ENCODE measurements at regions of chr2 and their contacts with region 1.

Region 1: GRCh38 chr2:233061591-233062450 is 1.7 kb downstream of the INPP5D start:
- DNase-seq: peak; percentile 56
- ATAC-seq: peak; percentile 29
- H3K4me3 Mint-ChIP-seq: peak overlapping the region; percentile 98
- H3K27ac Mint-ChIP-seq: peak overlapping the region; percentile 91
- H3K4me1 Mint-ChIP-seq: peaks cover 54% of the 10 kb centered on the region
- H3K27me3 Mint-ChIP-seq: no peaks in the 10 kb centered on the region

Region 2: DNA sequence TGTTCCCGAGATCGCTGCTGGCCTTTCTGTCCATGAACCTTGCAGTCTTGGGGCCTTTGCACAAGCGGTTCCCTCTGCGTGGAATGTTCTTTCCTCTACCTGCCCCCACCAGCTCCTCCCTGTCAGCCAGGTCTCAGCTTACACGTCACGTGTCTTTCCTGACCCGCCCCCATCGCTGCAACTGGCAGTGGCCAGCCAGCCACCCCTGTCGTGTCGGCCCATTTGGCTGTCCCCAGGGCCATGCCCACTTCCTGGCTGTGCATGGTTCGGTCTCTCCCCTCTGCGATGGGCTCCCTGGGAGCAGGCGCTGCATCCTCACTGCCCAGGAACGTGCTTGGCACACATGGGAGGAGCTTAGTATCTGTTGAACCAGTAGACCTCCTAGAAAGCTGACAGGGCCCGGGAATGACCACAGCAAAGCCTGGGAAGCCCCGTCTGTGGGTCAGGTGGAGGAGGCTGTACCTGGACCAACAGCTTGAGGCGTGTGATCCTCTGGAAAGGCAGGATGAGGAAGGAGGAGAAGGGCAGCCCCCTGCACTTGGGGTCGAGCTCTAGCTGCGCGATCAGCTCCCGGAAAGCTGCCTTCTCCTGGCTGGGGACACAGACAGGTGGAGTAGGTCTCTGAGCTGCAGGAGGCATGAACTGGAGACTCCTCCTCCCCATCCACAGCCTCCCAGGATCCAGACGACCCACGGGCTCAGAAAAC is 170.8 kb before region 1 on chr2:
- CTCF ChIA-PET with region 1: no interaction called
- POLR2A ChIA-PET with region 1: no interaction called
- DNase-seq: no peak
- ATAC-seq: peak; percentile 15
- H3K4me3 Mint-ChIP-seq: no peak overlapping the region
- H3K27ac Mint-ChIP-seq: no peak overlapping the region
- H3K4me1 Mint-ChIP-seq: no peaks in the 10 kb centered on the region
- H3K27me3 Mint-ChIP-seq: peaks cover 3% of the 10 kb centered on the region

Region 3: DNA sequence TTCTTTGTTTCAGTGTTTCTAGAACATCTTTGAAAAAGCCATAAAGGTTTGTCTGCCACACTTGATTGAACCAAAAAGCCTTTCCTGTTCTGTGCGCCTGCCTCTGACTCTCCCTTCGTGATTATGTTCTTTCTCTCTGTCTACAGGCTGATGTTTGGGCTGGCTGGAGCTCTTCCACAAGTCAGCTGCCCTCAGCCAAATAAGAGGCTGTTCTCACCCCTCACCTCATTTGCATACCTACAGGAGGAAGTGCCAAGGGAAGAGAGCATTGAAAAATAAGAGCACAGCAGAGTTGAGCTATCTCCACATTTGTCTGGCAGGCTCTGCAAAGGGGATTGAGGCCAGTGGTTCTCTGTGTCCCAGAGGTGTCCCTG is 14.1 kb after region 1 on chr2:
- CTCF ChIA-PET with region 1: interaction called, 18 read pairs
- POLR2A ChIA-PET with region 1: interaction called, 136 read pairs
- DNase-seq: peak; percentile 61
- ATAC-seq: peak; percentile 69
- H3K4me3 Mint-ChIP-seq: no peak overlapping the region
- H3K27ac Mint-ChIP-seq: no peak overlapping the region
- H3K4me1 Mint-ChIP-seq: peaks cover 44% of the 10 kb centered on the region
- H3K27me3 Mint-ChIP-seq: no peaks in the 10 kb centered on the region

Region 4: DNA sequence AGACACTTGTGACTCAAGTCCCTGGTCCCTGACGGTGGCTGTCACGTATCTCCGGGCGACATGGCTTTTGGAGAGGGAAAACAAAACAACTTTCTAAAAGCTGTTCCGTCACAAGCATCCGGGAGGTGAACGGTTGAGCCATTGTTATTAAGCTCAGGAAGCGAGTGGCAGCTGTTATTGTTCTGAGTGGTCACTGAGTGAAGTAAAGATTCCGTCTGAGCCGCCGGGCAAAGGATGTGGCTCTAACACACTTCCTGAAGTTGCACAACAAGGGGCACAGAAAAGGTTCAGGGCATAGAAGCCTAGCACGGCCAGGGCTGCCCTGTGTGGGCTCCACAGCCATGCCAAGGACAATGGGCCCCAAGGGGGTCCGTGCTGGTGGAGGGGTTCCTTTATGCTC is 22.7 kb after region 1 on chr2:
- CTCF ChIA-PET with region 1: interaction called, 24 read pairs
- POLR2A ChIA-PET with region 1: interaction called, 136 read pairs
- DNase-seq: peak; percentile 73
- ATAC-seq: peak; percentile 24
- H3K4me3 Mint-ChIP-seq: peak overlapping the region; percentile 71
- H3K27ac Mint-ChIP-seq: peak overlapping the region; percentile 93
- H3K4me1 Mint-ChIP-seq: peaks cover 84% of the 10 kb centered on the region
- H3K27me3 Mint-ChIP-seq: no peaks in the 10 kb centered on the region

Region 5: GRCh38 chr2:233100192-233100998 is 38.6 kb after region 1 on chr2:
- CTCF ChIA-PET with region 1: interaction called, 22 read pairs
- POLR2A ChIA-PET with region 1: interaction called, 5 read pairs
- DNase-seq: peak; percentile 71
- ATAC-seq: peak; percentile 85
- H3K4me3 Mint-ChIP-seq: peak overlapping the region; percentile 52
- H3K27ac Mint-ChIP-seq: peak overlapping the region; percentile 78
- H3K4me1 Mint-ChIP-seq: peaks cover 70% of the 10 kb centered on the region
- H3K27me3 Mint-ChIP-seq: no peaks in the 10 kb centered on the region

Region 6: GRCh38 chr2:233142355-233142897 is 80.6 kb after region 1 on chr2:
- CTCF ChIA-PET with region 1: interaction called, 5 read pairs
- POLR2A ChIA-PET with region 1: interaction called, 19 read pairs
- DNase-seq: peak; percentile 79
- ATAC-seq: peak; percentile 81
- H3K4me3 Mint-ChIP-seq: peak overlapping the region; percentile 57
- H3K27ac Mint-ChIP-seq: peak overlapping the region; percentile 91
- H3K4me1 Mint-ChIP-seq: peaks cover 54% of the 10 kb centered on the region
- H3K27me3 Mint-ChIP-seq: no peaks in the 10 kb centered on the region

Region 7: GRCh38 chr2:233165895-233166661 is 104.3 kb after region 1 on chr2:
- CTCF ChIA-PET with region 1: no interaction called
- POLR2A ChIA-PET with region 1: no interaction called
- DNase-seq: peak; percentile 49
- ATAC-seq: no peak
- H3K4me3 Mint-ChIP-seq: no peak overlapping the region
- H3K27ac Mint-ChIP-seq: no peak overlapping the region
- H3K4me1 Mint-ChIP-seq: peaks cover 9% of the 10 kb centered on the region
- H3K27me3 Mint-ChIP-seq: no peaks in the 10 kb centered on the region

Region 8: GRCh38 chr2:233242231-233242927 is 180.6 kb after region 1 on chr2:
- CTCF ChIA-PET with region 1: interaction called, 14 read pairs
- POLR2A ChIA-PET with region 1: interaction called, 5 read pairs
- DNase-seq: no peak
- ATAC-seq: no peak
- H3K4me3 Mint-ChIP-seq: no peak overlapping the region
- H3K27ac Mint-ChIP-seq: peak overlapping the region; percentile 43
- H3K4me1 Mint-ChIP-seq: peaks cover 71% of the 10 kb centered on the region
- H3K27me3 Mint-ChIP-seq: no peaks in the 10 kb centered on the region

Measured in activated CD8-positive, alpha-beta T cell treated with anti-CD3 and anti-CD28 coated beads, Interleukin-2, amount 10 ng/mL, durations not matched to agents 7 days and 5 days (primary cell).